GM12878 (cell line): ENCODE measurements at regions of chr6 and their contacts with region 1.

Region 1: DNA sequence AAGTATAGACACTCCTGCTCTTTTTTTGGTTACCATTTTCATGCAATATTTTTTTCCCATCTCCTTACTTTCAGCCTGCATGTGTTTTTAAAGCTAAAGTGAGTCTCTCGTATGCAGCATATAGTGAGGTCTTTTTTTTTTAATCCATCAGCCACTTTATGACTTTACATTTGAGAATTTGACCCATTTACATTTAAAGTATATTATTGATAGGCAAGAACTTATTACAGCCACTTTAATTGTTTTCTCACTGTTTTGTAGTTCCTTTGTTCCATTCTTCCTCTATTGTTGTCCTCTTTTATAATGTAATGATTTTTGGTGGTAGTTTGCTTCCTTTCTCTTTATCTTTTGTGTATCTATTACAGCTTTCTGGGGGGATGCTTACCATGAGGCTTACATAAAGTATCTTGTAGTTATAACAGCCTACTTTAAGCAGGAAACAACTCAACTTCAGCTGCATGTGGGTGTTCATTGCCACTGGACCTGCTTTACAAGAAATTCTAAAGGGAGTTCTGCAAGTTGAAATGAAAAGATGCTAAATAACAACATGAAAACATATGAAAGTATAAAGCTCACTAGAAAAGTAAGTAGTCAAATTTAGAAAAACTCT is 71.8 kb downstream of the TNFAIP3 start:
- DNase-seq: no peak
- ATAC-seq: no peak
- H3K4me3 ChIP-seq: no peak overlapping the region
- H3K27ac ChIP-seq: peak overlapping the region; percentile 82
- H3K4me1 ChIP-seq: peaks cover 35% of the 10 kb centered on the region
- H3K27me3 ChIP-seq: no peaks in the 10 kb centered on the region
- CTCF ChIP-seq: no peak
- EP300 ChIP-seq: no peak
- POLR2A ChIP-seq: no peak
- RAD21 ChIP-seq: no peak

Region 2: GRCh38 chr6:137697267-137697938 is 241.5 kb before region 1 on chr6:
- CTCF ChIA-PET with region 1: interaction called, 4 read pairs
- POLR2A ChIA-PET with region 1: interaction called, 7 read pairs
- RAD21 ChIA-PET with region 1: interaction called, 3 read pairs
- SMC1A ChIA-PET with region 1: interaction called, 11 read pairs
- in situ Hi-C with region 1: no loop called
- intact Hi-C with region 1: no loop called
- DNase-seq: no peak
- ATAC-seq: peak; percentile 80
- H3K4me3 ChIP-seq: no peak overlapping the region
- H3K27ac ChIP-seq: no peak overlapping the region
- H3K4me1 ChIP-seq: peaks cover 13% of the 10 kb centered on the region
- H3K27me3 ChIP-seq: no peaks in the 10 kb centered on the region
- CTCF ChIP-seq: peak; percentile 14 to 35 (median 27); a peak in 5 of 6 replicates
- EP300 ChIP-seq: no peak
- POLR2A ChIP-seq: no peak
- RAD21 ChIP-seq: peak; percentile 58

Region 3: DNA sequence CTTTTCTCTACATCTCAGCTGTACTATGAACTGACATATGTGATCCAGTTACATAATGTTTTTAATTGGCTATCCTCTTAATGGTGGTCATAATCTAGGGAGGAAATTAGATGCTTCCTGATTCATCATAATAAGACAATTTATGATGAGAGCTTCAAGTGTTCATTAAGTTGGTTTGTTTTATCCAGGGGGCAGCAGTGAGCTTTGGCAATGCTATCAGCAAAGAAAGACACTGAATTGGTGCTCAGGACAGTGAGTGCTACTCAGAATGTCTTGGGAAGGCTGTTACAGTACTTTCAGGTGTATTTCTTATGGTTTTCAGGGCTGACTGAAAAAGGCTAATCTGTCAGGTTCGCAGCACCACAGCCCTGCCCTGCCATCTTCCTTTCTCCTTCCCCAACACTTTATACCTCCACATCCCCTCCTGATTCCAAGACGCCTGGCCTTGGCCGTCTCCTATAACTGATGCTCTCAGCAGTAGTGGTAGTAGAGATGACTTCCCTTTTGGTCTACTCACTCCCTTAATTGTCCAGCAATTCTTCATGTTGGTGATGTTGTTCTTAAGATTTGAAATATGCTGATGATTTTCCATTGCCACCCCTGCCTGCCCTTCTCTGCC is 138.8 kb before region 1 on chr6:
- CTCF ChIA-PET with region 1: interaction called, 34 read pairs
- POLR2A ChIA-PET with region 1: interaction called, 3 read pairs
- RAD21 ChIA-PET with region 1: interaction called, 24 read pairs
- SMC1A ChIA-PET with region 1: interaction called, 28 read pairs
- in situ Hi-C with region 1: loop called (anchors 5 kb)
- intact Hi-C with region 1: loop called (anchors 5 kb)
- DNase-seq: no peak
- ATAC-seq: peak; percentile 96
- H3K4me3 ChIP-seq: no peak overlapping the region
- H3K27ac ChIP-seq: no peak overlapping the region
- H3K4me1 ChIP-seq: peaks cover 19% of the 10 kb centered on the region
- H3K27me3 ChIP-seq: no peaks in the 10 kb centered on the region
- CTCF ChIP-seq: peak; percentile 67 to 78 (median 70)
- EP300 ChIP-seq: no peak
- POLR2A ChIP-seq: no peak
- RAD21 ChIP-seq: peak; percentile 88

Region 4: GRCh38 chr6:137903933-137904821 is 34.7 kb before region 1 on chr6:
- CTCF ChIA-PET with region 1: interaction called, 71 read pairs
- POLR2A ChIA-PET with region 1: interaction called, 7 read pairs
- RAD21 ChIA-PET with region 1: interaction called, 29 read pairs
- SMC1A ChIA-PET with region 1: interaction called, 102 read pairs
- in situ Hi-C with region 1: no loop called
- intact Hi-C with region 1: loop called (anchors 1 kb)
- DNase-seq: no peak
- ATAC-seq: peak; percentile 79
- H3K4me3 ChIP-seq: peak overlapping the region; percentile 54; the same call in 1 of the 2 replicates
- H3K27ac ChIP-seq: peak overlapping the region; percentile 95
- H3K4me1 ChIP-seq: peaks cover 23% of the 10 kb centered on the region
- H3K27me3 ChIP-seq: no peaks in the 10 kb centered on the region
- CTCF ChIP-seq: no peak
- EP300 ChIP-seq: peak; percentile 69 to 72; a peak in 2 of 4 replicates
- POLR2A ChIP-seq: peak; percentile 41
- RAD21 ChIP-seq: peak; percentile 22; the same call in 1 of the 2 replicates

Region 5: GRCh38 chr6:137921823-137922222 is 17.1 kb before region 1 on chr6:
- CTCF ChIA-PET with region 1: interaction called, 102 read pairs
- POLR2A ChIA-PET with region 1: interaction called, 26 read pairs
- RAD21 ChIA-PET with region 1: interaction called, 57 read pairs
- SMC1A ChIA-PET with region 1: interaction called, 111 read pairs
- in situ Hi-C with region 1: no loop called
- intact Hi-C with region 1: loop called (anchors 1 kb)
- DNase-seq: no peak
- ATAC-seq: peak; percentile 61
- H3K4me3 ChIP-seq: no peak overlapping the region
- H3K27ac ChIP-seq: peak overlapping the region; percentile 33; the same call in 1 of the 2 replicates
- H3K4me1 ChIP-seq: peaks cover 65% of the 10 kb centered on the region
- H3K27me3 ChIP-seq: no peaks in the 10 kb centered on the region
- CTCF ChIP-seq: peak; percentile 16 to 33 (median 22); a peak in 3 of 6 replicates
- EP300 ChIP-seq: no peak
- POLR2A ChIP-seq: no peak
- RAD21 ChIP-seq: peak; percentile 51

Region 6: GRCh38 chr6:137958811-137959565 is 20.1 kb after region 1 on chr6:
- CTCF ChIA-PET with region 1: interaction called, 16 read pairs
- POLR2A ChIA-PET with region 1: no interaction called
- RAD21 ChIA-PET with region 1: interaction called, 7 read pairs
- SMC1A ChIA-PET with region 1: interaction called, 112 read pairs
- in situ Hi-C with region 1: no loop called
- intact Hi-C with region 1: no loop called
- DNase-seq: no peak
- ATAC-seq: no peak
- H3K4me3 ChIP-seq: no peak overlapping the region
- H3K27ac ChIP-seq: no peak overlapping the region
- H3K4me1 ChIP-seq: no peaks in the 10 kb centered on the region
- H3K27me3 ChIP-seq: no peaks in the 10 kb centered on the region
- CTCF ChIP-seq: no peak
- EP300 ChIP-seq: no peak
- POLR2A ChIP-seq: no peak
- RAD21 ChIP-seq: no peak

Region 7: GRCh38 chr6:138001750-138002349 is 63.0 kb after region 1 on chr6:
- CTCF ChIA-PET with region 1: interaction called, 296 read pairs
- POLR2A ChIA-PET with region 1: no interaction called
- RAD21 ChIA-PET with region 1: interaction called, 23 read pairs
- SMC1A ChIA-PET with region 1: interaction called, 199 read pairs
- in situ Hi-C with region 1: no loop called
- intact Hi-C with region 1: no loop called
- DNase-seq: no peak
- ATAC-seq: peak; percentile 62
- H3K4me3 ChIP-seq: no peak overlapping the region
- H3K27ac ChIP-seq: no peak overlapping the region
- H3K4me1 ChIP-seq: no peaks in the 10 kb centered on the region
- H3K27me3 ChIP-seq: no peaks in the 10 kb centered on the region
- CTCF ChIP-seq: peak; percentile 73 to 91 (median 85)
- EP300 ChIP-seq: no peak
- POLR2A ChIP-seq: no peak
- RAD21 ChIP-seq: peak; percentile 89